Cardiac septum (tissue), 1 donor: ENCODE measurements at regions of chr9 and their contacts with region 1.

Region 1: DNA sequence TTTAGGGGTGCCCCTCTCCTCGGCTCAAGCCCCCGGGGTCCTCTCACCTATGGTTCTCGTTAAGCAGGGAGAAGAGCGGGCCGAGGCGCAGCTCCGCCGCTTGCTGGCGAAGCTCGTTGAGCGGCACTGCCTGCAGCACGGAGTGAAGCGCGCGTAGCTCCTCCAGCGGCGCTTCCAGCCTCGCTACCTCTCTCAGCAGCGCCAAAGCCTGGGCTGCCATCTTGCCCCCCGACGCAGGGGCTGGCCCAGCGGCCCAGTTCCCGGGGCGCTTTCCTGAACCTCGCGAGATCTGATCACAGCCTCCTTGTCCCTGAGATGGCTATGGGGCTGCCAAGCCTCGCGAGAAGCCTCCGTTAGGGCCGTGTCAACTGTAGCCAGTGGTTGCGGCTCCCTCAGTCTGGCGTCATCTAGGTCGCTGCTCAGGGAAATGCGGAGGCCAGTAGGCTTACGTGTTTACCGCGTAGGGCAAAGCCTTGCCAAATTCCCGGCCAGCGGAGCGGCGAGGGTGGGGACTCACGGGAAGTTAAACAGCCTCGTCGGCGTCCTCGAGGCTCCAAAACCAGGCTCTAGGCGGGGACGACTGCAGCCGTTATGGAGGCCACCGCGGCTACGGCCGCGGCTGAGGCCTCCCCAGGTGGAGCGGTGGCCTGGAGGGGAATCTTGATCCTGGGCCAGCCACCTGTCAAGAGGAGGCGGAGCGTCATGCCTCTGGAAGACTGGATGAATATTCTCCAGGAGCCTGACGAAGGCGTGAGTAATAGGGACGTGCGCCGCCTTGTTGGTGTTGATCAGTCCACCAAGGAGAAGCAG is at the start of gene PSMD5:
- DNase-seq: peak; percentile 98
- total RNA-seq, gene PSMD5: 13.5 TPM

Region 2: GRCh38 chr9:120655005-120655622 is 187.8 kb before region 1 on chr9:
- intact Hi-C with region 1: no loop called
- DNase-seq: no peak

Region 3: DNA sequence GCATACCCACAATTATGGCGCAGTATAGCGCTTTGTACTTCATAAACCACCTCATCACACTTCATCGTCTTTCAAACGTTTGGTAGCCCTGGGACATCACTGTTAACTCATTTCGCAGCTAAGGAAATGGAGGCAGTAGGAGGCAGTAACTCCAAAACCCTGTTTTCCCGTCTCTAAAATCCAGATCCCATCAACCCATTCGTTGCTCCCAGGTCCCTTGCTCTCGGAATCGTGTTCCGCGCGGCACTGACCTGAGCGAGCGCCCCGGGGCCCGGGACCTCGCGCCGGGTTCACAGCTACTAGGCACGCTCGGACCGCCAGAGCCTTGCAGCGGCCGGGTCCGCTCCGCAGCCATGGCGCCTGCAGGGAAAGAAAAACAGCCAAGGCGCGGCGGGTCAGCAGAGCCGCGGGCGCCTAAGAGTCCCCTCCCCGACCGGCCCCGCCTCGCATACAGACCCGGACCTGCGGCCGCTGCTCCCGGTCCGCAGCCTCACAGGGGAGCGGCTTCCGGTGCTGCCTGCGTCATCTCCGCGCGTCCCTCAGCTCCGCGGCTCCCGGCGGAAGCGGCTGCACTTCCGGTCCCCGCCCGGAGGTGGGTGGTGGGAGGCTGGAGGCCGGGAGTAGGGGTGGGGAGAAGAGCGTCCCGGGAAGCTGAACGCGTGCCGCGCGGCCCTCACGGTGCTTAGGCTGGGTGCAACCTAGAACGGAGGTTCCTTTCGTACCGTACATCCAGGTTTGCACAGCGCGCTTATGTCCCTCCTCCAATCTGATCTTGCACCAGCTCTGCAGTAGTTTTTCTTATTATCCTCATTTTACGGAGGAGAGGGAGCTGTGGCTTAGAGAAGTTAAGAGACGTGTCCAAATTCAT is 49.8 kb before region 1 on chr9 and contains the start of gene FBXW2:
- intact Hi-C with region 1: loop called (anchors 5 kb)
- DNase-seq: peak; percentile 97
- total RNA-seq, gene FBXW2: 46.2 TPM

Region 4: GRCh38 chr9:120875954-120876841 is 33.3 kb after region 1 on chr9:
- intact Hi-C with region 1: loop called (anchors 5 kb)
- DNase-seq: peak; percentile 94